Cardiac septum (tissue), 1 donor: ENCODE measurements at regions of chr5 and their contacts with region 1.

Region 1: DNA sequence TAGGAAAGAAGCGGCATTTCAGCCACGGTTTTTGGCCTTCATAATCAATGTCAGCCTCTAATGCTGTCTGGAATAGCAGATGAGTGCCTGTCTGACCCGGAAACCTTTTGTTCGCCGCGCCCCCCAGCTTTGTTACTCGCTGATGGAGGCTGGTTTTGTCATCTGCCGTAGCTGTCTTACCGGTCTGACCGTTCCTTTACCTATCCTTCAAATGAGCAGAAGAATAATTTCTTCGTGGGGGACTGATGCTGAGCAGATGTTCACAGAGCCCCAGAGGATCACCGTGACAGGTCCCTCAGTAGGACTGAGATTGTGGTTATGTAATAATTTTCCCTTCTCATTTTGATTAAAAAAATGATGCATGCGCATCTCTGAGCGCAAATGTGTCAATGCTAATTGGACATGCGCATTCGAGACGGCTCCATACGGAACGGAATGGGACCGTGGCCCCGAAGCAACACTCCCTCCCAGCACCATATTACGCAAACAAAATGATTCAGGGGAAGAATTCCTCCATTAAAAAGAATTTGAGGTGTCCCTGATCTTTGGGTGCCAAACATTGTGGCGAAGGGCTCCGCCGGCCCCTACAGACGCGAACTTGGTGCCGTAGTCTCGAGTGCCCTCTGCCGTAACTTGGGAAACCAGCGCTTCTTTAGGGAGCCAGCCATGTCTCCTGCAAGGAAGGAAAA is 27.6 kb downstream of the TLX3 start:
- DNase-seq: no peak

Region 2: GRCh38 chr5:171207256-171207847 is 129.3 kb before region 1 on chr5:
- intact Hi-C with region 1: loop called (anchors 5 kb)
- DNase-seq: no peak